Prostate gland (tissue), 2 donors: ENCODE measurements at regions of chr5 and their contacts with region 1.

Region 1: GRCh38 chr5:54517174-54518092 is at the start of gene SNX18:
- DNase-seq: peak; percentile 88
- H3K4me3 ChIP-seq: peak within 1 kb of the TSS; percentile 92 to 95
- H3K27ac ChIP-seq: peak within 1 kb of the TSS; percentile 85 to 91
- H3K4me1 ChIP-seq: peaks cover 3% of the 10 kb centered on the region
- H3K27me3 ChIP-seq: no peaks in the 10 kb centered on the region
- CTCF ChIP-seq: peak; percentile 97 to 99 (median 98)
- POLR2A ChIP-seq: peak; percentile 63
- total RNA-seq, gene SNX18: 26.3 to 80.4 TPM

Region 2: DNA sequence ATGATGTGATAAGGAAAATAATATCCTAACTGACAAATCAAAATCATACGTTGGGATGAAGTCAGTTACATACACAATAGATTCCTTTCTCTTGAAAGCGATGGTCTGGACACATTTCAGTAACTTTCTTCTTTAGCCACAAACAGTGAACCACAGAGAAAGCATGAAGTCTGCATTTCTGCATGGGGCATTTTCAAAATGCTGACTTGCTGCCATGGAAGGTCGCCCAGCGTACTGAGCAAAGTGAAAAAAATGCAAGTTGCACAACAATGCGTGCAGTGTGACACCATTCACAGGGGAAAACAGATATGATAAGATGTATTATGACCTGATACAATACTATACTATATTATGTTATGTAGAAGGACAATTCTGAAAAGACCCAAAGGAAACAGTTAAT is 146.4 kb after region 1 on chr5:
- intact Hi-C with region 1: loop called (anchors 10 kb)
- DNase-seq: no peak
- H3K4me3 ChIP-seq: no peak overlapping the region
- H3K27ac ChIP-seq: no peak overlapping the region
- H3K4me1 ChIP-seq: no peaks in the 10 kb centered on the region
- H3K27me3 ChIP-seq: no peaks in the 10 kb centered on the region
- CTCF ChIP-seq: no peak
- POLR2A ChIP-seq: no peak

Region 3: DNA sequence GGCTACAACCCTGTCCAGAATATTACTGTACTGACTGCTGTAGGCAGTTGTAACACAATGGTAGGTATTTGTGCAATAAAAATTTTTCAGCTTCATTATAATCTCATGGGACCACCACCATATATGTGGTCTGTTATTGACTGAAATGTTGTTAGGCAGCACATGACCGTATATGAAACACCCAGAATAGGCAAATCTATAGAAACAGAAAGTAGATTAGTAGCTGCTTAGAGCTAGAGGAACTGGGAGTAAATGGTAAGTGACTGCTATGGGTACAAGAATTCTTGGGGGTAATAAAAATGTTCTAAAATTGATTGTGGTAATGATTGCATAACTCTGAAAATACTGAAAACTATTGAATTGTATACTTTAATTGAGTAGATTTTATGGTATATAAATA is 282.2 kb after region 1 on chr5:
- intact Hi-C with region 1: no loop called
- DNase-seq: no peak
- H3K4me3 ChIP-seq: no peak overlapping the region
- H3K27ac ChIP-seq: no peak overlapping the region
- H3K4me1 ChIP-seq: no peaks in the 10 kb centered on the region
- H3K27me3 ChIP-seq: no peaks in the 10 kb centered on the region
- CTCF ChIP-seq: no peak
- POLR2A ChIP-seq: no peak

Region 4: DNA sequence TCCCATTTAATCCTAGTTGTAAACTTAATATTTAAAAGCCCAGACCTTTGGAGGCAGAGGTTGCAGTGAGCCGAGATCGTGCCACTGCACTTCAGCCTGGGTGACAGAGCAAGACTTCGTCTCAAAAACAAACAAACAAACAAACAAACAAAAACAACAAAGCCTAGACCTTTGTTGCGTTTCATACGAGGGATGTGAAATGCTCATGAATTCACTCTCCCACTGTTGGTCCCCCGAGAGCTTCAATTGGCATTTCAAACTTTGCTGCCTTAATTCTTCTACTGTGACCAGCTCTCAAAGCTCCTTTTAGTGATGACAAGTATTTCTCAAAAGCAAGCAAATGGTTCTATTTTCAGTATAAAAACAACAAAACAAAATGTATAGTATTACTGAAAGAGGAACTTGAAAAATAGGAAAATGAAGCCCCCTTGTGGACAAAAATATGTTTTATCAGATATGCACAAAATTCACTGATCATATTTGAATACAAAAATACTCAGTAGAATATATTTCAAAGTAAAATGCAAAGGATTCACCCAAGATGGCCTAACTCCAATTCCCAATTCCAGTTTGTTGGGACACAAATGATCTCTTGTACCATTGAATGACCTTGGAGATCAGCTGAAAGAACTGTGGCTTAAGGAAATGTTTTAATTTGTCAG is 327.6 kb after region 1 on chr5:
- intact Hi-C with region 1: loop called (anchors 2 kb)
- DNase-seq: no peak
- H3K4me3 ChIP-seq: no peak overlapping the region
- H3K27ac ChIP-seq: no peak overlapping the region
- H3K4me1 ChIP-seq: no peaks in the 10 kb centered on the region
- H3K27me3 ChIP-seq: no peaks in the 10 kb centered on the region
- CTCF ChIP-seq: peak; percentile 65 to 73 (median 70)
- POLR2A ChIP-seq: no peak

Region 5: DNA sequence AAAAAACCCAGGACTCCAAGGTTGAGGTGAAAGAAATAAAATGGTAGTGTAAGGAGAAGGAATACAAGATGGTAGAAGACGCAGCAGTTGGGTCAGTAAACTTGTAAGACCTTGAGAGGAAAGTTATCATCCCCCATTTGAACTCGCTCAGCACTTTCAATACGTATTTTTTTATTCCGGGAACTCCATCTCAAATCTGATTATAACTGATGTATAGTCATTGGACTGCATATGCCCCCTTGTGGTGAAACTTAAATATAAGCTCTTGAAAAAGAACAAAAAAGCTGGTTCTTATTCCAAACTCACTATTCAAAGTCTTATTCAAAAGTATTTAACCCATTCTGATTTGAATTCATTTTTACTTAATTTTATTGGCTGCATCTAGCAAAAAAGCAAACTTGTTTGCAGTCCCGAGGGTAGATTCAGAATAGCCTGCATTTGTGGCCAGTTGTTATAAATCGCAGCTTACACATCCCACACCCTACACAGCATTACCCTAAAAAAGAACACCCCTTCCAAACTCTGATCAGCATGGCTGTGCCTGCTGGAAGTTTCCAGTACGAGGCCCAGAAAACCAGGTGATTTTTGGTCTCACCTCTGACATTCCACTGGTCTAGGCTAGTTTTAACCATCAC is 350.0 kb after region 1 on chr5:
- intact Hi-C with region 1: loop called (anchors 2 kb)
- DNase-seq: no peak
- H3K4me3 ChIP-seq: no peak overlapping the region
- H3K27ac ChIP-seq: no peak overlapping the region
- H3K4me1 ChIP-seq: no peaks in the 10 kb centered on the region
- H3K27me3 ChIP-seq: no peaks in the 10 kb centered on the region
- CTCF ChIP-seq: peak; percentile 53 to 71 (median 68)
- POLR2A ChIP-seq: no peak

Region 6: DNA sequence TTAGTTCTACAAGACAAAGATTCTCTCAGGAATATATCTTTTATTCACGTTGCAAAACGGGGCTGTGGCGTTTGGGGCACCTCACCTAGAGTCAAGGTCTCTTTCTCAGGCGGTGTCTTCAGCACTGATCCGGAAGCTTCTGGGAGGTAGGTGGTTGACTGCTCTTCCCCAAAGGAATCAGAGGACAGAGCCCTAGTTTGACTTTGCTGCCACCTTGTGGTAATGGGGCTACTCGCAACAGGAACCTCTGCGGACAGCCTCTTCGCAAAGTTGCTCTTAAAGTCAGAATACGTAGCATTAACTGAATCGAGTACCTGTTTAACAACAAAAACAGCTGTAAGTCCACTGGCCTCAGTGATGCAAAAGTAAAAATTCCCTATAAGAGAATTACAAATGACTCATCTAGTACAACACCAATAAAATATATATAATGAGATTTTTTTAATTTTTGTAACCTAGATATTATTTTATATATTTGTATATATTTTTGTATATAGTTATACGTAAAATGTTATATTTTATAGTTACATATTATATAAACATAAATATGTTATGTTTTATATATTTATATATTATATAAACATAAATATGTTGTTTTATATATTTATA is 629.2 kb after region 1 on chr5:
- intact Hi-C with region 1: loop called (anchors 5 kb)
- DNase-seq: peak; percentile 83
- H3K4me3 ChIP-seq: no peak overlapping the region
- H3K27ac ChIP-seq: no peak overlapping the region
- H3K4me1 ChIP-seq: no peaks in the 10 kb centered on the region
- H3K27me3 ChIP-seq: peaks cover 2% of the 10 kb centered on the region
- CTCF ChIP-seq: peak; percentile 77 to 81 (median 80)
- POLR2A ChIP-seq: no peak